ENCODE measurements at regions of chr12 and their contacts with region 1.

Region 1: GRCh38 chr12:24991209-24992049 is 42.5 kb upstream of the BCAT1 start:
- DNase-seq: no peak
- ATAC-seq: peak; percentile 82 to 97 (median 91)
- H3K4me3 ChIP-seq: no peak overlapping the region
- H3K27ac ChIP-seq: no peak overlapping the region
- H3K4me1 ChIP-seq: no peaks in the 10 kb centered on the region
- H3K27me3 ChIP-seq: no peaks in the 10 kb centered on the region
- CTCF ChIP-seq: peak in 3 of 4 donors; percentile 18 to 54 (median 29)

Region 2: GRCh38 chr12:25130741-25131188 is 139.3 kb after region 1 on chr12:
- intact Hi-C with region 1: loop called in 2 of 3 experiments (anchors 5 kb)
- DNase-seq: no peak
- ATAC-seq: peak in 3 of 4 donors; percentile 55 to 69 (median 66)
- H3K4me3 ChIP-seq: no peak overlapping the region
- H3K27ac ChIP-seq: no peak overlapping the region
- H3K4me1 ChIP-seq: no peaks in the 10 kb centered on the region
- H3K27me3 ChIP-seq: no peaks in the 10 kb centered on the region
- CTCF ChIP-seq: peak; percentile 24 to 59 (median 52)

Measured in pancreas (tissue), 10 donors.